Caco-2 (cell line): ENCODE measurements at regions of chr4 and their contacts with region 1.

Region 1: GRCh38 chr4:141860974-141861373 is 224.6 kb downstream of the IL15 start:
- DNase-seq: no peak
- H3K4me3 ChIP-seq: no peak overlapping the region
- H3K4me3 Mint-ChIP-seq: no peak overlapping the region
- H3K27ac Mint-ChIP-seq: no peak overlapping the region
- H3K4me1 ChIP-seq: no peaks in the 10 kb centered on the region
- H3K4me1 Mint-ChIP-seq: no peaks in the 10 kb centered on the region
- H3K27me3 ChIP-seq: no peaks in the 10 kb centered on the region
- H3K27me3 Mint-ChIP-seq: no peaks in the 10 kb centered on the region
- CTCF ChIP-seq: no peak

Region 2: GRCh38 chr4:142846729-142847596 is 986.0 kb after region 1 on chr4:
- CTCF ChIA-PET with region 1: no interaction called
- POLR2A ChIA-PET with region 1: no interaction called
- intact Hi-C with region 1: loop called (anchors 2 kb)
- DNase-seq: peak; percentile 57 to 65
- H3K4me3 ChIP-seq: peak overlapping the region; percentile 31
- H3K4me3 Mint-ChIP-seq: peak overlapping the region; percentile 74
- H3K27ac Mint-ChIP-seq: no peak overlapping the region
- H3K4me1 ChIP-seq: peaks cover 4% of the 10 kb centered on the region; the same call in 1 of the 2 replicates
- H3K4me1 Mint-ChIP-seq: no peaks in the 10 kb centered on the region
- H3K27me3 ChIP-seq: 0 out of 2 replicates have a peak, but pooled peaks cover 1% of the 10 kb centered on the region
- H3K27me3 Mint-ChIP-seq: peaks cover 24% of the 10 kb centered on the region
- CTCF ChIP-seq: peak; percentile 61